K562 (cell line): ENCODE measurements at regions of chr7 and their contacts with region 1.

Region 1: GRCh38 chr7:105759670-105760550 is 116.5 kb downstream of the ATXN7L1 start:
- DNase-seq: peak; percentile 29 to 55 (median 36)
- ATAC-seq: peak; percentile 73
- H3K4me3 ChIP-seq: no peak overlapping the region
- H3K27ac ChIP-seq: no peak overlapping the region
- H3K4me1 ChIP-seq: no peaks in the 10 kb centered on the region
- H3K27me3 ChIP-seq: peaks cover 0 to 11% of the 10 kb centered on the region in 2 experiments; a peak in 1 of 5 replicates
- CTCF ChIP-seq: peak; percentile 65 to 89 (median 71); a peak in 5 of 6 replicates
- EP300 ChIP-seq: no peak
- POLR2A ChIP-seq: no peak
- RAD21 ChIP-seq: peak; percentile 81 to 87

Region 2: GRCh38 chr7:105426606-105427146 is 333.2 kb before region 1 on chr7:
- CTCF ChIA-PET with region 1: no interaction called
- POLR2A ChIA-PET with region 1: no interaction called
- in situ Hi-C with region 1: no loop called
- intact Hi-C with region 1: no loop called
- DNase-seq: no peak
- ATAC-seq: no peak
- H3K4me3 ChIP-seq: no peak overlapping the region
- H3K27ac ChIP-seq: no peak overlapping the region
- H3K4me1 ChIP-seq: peaks cover 0 to 5% of the 10 kb centered on the region in 2 experiments; a peak in 1 of 5 replicates
- H3K27me3 ChIP-seq: peaks cover 3 to 8% of the 10 kb centered on the region in 2 experiments; a peak in 4 of 5 replicates
- CTCF ChIP-seq: no peak
- EP300 ChIP-seq: no peak
- POLR2A ChIP-seq: no peak
- RAD21 ChIP-seq: no peak

Region 3: GRCh38 chr7:105522062-105522936 is 237.6 kb before region 1 on chr7 and contains the start of gene PUS7:
- CTCF ChIA-PET with region 1: no interaction called
- POLR2A ChIA-PET with region 1: no interaction called
- in situ Hi-C with region 1: no loop called
- intact Hi-C with region 1: no loop called
- DNase-seq: peak; percentile 98 to 99 (median 98)
- ATAC-seq: peak; percentile 93
- H3K4me3 ChIP-seq: peak within 1 kb of the TSS; percentile 98
- H3K27ac ChIP-seq: peak within 1 kb of the TSS; percentile 86
- H3K4me1 ChIP-seq: peaks cover 17 to 29% of the 10 kb centered on the region in 2 experiments; a peak in 3 of 5 replicates
- H3K27me3 ChIP-seq: no peaks in the 10 kb centered on the region
- CTCF ChIP-seq: peak in 2 of 3 experiments; percentile 17 to 51; a peak in 4 of 6 replicates
- EP300 ChIP-seq: no peak
- POLR2A ChIP-seq: peak; percentile 94
- RAD21 ChIP-seq: no peak
- polyA plus RNA-seq, gene PUS7: 15.1 to 17.1 TPM

Region 4: DNA sequence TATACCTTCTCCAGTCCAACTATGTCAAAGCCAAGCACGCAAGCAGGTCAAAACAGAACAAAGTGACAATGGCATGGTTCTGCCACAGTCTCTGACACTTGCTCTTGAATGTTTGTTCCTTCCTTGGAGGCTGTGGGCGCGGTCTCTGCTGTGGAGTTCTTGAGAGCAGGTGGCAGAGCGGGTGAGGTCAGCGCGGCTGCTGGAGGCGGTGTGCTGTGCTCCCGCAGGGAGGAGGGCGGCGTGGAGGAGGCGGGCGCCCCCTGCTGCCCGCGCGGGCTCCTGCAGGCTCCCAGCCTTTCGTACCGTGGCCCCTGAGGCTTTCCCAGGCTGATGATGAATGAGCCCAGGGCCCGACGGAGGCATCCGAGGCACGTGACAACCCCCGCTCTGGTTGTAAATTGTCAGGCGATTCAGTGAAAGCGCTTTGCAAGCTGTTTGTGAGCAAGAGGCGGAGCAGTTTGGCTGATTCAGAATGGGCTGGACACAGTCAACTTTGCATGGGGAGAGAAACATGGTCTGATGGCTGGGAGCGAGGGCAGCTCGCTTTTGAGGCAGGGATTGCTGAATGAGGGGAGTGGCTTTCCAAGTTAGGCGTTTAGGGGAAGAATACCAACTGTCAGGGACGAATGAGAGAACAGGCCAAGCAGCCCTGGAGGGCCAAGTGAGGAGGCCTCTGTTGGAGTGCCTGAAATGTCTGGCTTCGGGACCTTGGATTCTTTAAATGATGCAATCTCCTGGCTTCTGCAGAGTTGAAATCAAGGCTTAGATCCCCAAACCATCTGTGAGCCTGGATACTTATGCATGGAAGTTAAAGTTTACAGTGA is 249.7 kb after region 1 on chr7:
- CTCF ChIA-PET with region 1: interaction called, 17 read pairs
- POLR2A ChIA-PET with region 1: interaction called, 4 read pairs
- in situ Hi-C with region 1: no loop called
- intact Hi-C with region 1: loop called (anchors 2 kb)
- DNase-seq: peak; percentile 86 to 98 (median 94)
- ATAC-seq: peak; percentile 100
- H3K4me3 ChIP-seq: no peak overlapping the region
- H3K27ac ChIP-seq: no peak overlapping the region
- H3K4me1 ChIP-seq: peaks cover 9 to 15% of the 10 kb centered on the region in 2 experiments; a peak in 4 of 5 replicates
- H3K27me3 ChIP-seq: peaks cover 0 to 17% of the 10 kb centered on the region in 2 experiments; a peak in 1 of 5 replicates
- CTCF ChIP-seq: peak; percentile 98 to 100 (median 98)
- EP300 ChIP-seq: no peak
- POLR2A ChIP-seq: no peak
- RAD21 ChIP-seq: peak; percentile 89 to 95

Region 5: DNA sequence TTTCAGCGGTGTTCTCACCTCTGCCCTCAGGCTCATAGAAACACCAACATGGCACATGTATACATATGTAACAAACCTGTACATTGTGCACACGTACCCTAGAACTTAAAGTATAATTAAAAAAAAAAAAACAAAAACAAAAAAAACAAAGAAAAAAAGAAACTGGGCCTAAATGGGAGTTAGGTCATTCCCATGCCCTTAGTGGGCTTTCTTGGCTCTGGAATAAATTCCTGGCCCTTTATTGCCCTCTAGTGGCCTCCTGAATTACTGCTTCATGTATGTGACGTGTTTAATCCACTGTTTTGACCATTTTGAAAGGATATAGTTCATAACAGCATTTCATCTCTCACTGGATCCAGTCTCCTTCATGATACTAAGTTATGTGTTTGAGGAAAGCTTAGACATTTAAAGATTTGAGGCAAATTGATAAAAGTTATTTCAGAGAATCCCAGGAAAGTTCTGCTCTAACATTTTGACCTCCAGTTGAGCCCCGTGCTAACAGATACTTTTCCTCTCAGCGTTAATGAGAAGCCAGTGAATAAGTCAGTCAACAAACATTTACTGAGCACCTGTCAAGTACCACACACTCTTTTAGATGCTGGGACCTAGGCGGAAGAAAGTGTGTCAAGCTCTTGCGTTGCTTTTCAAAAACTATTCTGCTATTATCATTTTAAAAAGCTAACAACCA is 406.9 kb after region 1 on chr7:
- CTCF ChIA-PET with region 1: interaction called, 6 read pairs
- POLR2A ChIA-PET with region 1: no interaction called
- in situ Hi-C with region 1: no loop called
- intact Hi-C with region 1: loop called (anchors 2 kb)
- DNase-seq: peak; percentile 75 to 87 (median 84)
- ATAC-seq: peak; percentile 92
- H3K4me3 ChIP-seq: no peak overlapping the region
- H3K27ac ChIP-seq: no peak overlapping the region
- H3K4me1 ChIP-seq: no peaks in the 10 kb centered on the region
- H3K27me3 ChIP-seq: peaks cover 0 to 18% of the 10 kb centered on the region in 2 experiments; a peak in 2 of 5 replicates
- CTCF ChIP-seq: peak; percentile 79 to 98 (median 92)
- EP300 ChIP-seq: no peak
- POLR2A ChIP-seq: no peak
- RAD21 ChIP-seq: peak; percentile 85 to 92